ENCODE measurements at regions of chr2 and their contacts with region 1.

Region 1: DNA sequence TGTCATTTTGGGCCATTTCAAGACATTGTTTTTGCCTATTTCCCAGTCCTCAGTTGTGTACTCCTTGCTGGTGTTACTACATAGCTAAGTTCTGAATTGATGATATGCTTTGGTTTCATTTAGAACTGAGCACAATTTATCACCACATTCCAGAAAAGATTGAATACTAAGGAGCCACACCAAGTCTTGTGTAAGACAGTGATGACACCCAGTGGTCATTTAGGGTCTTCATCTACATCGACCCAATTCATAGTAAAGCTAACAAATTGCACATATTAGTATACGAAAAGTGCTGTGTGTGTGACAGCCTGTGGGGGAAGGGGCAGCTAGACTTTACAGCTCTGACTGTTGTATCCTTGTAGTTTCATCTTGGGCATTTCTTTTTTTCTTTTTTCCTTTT is 10.9 kb upstream of the DLX2 start:
- DNase-seq: no peak

Region 2: DNA sequence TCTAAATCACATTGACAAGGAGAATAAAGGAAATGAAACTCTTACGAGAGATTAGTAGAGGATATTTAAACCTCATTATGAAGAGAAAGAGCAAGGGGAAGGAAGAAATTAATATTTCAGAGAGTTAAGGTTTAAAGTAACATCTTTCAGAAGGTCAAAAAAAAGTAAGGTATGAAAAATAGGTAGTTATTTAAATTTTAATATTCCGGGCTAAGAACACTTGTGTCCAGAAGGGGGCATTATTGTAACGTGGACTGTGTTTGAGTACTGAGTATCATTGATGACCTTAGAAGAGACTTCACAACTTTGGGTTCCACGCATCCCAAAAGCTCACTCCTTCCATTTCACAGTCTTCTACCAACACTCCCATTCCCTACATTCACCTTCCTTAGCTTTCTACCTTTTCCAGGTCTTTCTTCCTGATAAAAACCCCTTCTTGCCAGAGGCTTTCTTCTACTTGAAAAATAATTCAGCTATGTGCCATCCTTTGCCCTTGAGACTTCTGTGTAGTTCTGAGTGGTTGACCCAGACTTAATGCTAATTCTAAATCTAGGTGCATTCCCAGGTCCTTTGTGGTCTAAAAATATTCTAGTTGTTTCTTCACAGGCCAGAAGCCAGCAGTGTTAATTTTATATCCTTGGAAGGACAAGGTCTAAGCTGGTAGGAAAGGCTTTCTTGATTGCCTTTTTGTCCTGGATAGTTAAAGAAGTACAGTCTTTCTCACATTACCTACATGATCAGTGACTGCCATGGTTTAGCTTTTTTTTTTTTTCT is 409.9 kb before region 1 on chr2:
- CTCF ChIA-PET with region 1: interaction called, 10 read pairs
- POLR2A ChIA-PET with region 1: no interaction called
- DNase-seq: peak; percentile 26

Region 3: GRCh38 chr2:172168917-172169346 is 55.3 kb after region 1 on chr2:
- CTCF ChIA-PET with region 1: no interaction called
- POLR2A ChIA-PET with region 1: no interaction called
- DNase-seq: no peak